ENCODE measurements at regions of chr9 and their contacts with region 1.

Region 1: GRCh38 chr9:34637356-34638137 is at the start of gene SIGMAR1:
- DNase-seq: peak; percentile 96
- ATAC-seq: peak; percentile 96
- H3K4me3 ChIP-seq: peak within 1 kb of the TSS; percentile 49 to 80 (median 63)
- H3K4me3 Mint-ChIP-seq: peak within 1 kb of the TSS; percentile 92
- H3K27ac ChIP-seq: peak within 1 kb of the TSS; percentile 56 to 69
- H3K27ac Mint-ChIP-seq: peak within 1 kb of the TSS; percentile 86
- H3K4me1 ChIP-seq: peaks cover 16 to 32% of the 10 kb centered on the region in 2 donors
- H3K4me1 Mint-ChIP-seq: peaks cover 30% of the 10 kb centered on the region
- H3K27me3 ChIP-seq: no peaks in the 10 kb centered on the region
- H3K27me3 Mint-ChIP-seq: no peaks in the 10 kb centered on the region
- CTCF ChIP-seq: no peak
- total RNA-seq, gene SIGMAR1: 21.4 and 23.0 TPM in 2 replicates

Region 2: DNA sequence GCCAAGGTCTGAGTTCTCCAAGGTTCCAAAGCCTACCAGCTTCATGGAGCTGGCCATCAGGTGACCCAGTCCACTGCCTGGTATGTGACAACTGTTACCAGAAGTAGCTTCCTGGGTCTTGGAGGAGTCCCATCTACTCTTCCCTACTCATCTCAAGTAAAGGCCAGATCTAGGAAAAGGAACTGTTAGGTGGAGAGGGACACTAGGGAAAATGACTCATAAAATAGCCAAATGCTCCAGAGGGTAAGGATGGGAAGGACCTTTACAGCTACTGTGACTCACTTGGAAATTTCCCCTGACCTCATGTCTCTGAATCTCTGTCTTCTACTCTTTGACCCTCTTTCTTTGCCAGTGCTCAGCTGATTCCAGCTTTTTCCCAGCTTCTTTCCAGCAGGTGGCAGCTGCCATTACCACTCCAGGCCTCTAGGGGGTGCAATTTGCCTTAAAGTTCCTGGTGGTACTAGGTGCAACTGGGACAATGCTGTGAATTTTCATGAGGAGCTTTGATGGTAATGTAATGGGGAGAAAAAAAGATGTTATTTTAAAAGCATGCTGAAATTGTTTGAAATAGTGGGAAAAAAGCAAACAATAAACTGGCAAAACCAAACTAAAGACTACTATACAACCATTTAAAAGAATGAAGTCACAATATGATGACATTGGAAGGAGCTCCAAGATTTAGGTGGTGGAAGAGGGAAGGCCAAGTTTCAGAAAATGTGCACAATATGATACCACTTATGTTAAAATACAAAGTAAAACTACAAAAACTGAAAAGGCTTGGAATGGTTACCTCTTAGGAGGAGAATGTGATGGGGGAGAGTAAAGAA is 233.8 kb before region 1 on chr9:
- CTCF ChIA-PET with region 1: interaction called, 23 read pairs
- POLR2A ChIA-PET with region 1: no interaction called
- intact Hi-C with region 1: no loop called
- DNase-seq: peak; percentile 63
- ATAC-seq: peak; percentile 67
- H3K4me3 ChIP-seq: no peak overlapping the region
- H3K4me3 Mint-ChIP-seq: no peak overlapping the region
- H3K27ac ChIP-seq: no peak overlapping the region
- H3K27ac Mint-ChIP-seq: no peak overlapping the region
- H3K4me1 ChIP-seq: no peaks in the 10 kb centered on the region
- H3K4me1 Mint-ChIP-seq: no peaks in the 10 kb centered on the region
- H3K27me3 ChIP-seq: no peaks in the 10 kb centered on the region
- H3K27me3 Mint-ChIP-seq: no peaks in the 10 kb centered on the region
- CTCF ChIP-seq: peak; percentile 100

Region 3: DNA sequence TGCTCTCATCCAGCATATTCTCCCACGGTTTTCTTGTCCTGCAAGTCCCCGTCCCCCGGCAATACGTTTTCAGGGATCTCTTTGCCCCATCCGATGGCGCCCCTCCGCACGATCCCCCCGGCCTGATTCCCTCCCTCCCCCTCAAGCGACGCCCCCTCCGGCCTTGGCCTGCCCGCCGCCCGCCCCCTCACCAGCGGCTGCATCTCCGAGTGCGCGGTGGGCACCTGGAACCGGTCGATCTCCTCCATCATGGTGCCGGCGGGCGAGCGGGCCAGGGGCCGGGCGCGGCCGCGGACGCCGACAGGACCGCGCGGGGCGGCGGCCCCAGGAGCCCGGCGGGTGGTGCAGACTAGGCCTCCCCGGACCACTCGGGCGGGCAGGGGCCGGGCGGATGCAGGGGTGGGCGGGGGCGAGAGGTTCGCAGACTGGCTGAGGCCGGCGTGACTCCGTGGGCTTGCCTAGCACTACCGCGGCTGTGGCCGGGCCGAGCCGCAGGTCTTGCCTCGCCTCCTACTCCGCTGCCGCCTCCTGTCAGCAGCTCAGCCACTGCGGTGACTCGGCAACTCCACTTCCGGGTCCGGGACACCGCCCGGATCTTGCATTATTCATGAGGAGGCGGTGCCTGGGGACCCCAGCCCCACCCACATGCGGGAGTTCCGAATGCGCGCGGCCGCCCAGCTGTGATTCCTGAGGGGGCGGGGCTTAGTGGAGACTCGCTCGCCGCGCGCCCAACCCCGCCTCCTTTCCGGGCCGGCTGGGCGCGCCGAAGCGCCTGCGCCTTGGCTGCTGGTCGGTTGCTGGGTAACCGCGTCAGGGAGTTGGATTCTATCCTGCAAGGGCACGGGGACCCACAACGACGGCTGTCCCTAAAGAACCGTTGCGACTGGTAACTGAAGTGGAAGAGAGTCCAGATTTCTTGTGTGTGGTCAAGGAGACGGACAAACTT is 179.3 kb before region 1 on chr9 and contains the starts of genes DNAI1 and FAM219A:
- CTCF ChIA-PET with region 1: interaction called, 7 read pairs
- POLR2A ChIA-PET with region 1: no interaction called
- intact Hi-C with region 1: loop called (anchors 1 kb)
- DNase-seq: peak; percentile 99
- ATAC-seq: peak; percentile 96
- H3K4me3 ChIP-seq: peak within 1 kb of the TSS; percentile 32 to 76 (median 58)
- H3K4me3 Mint-ChIP-seq: peak within 1 kb of the TSS; percentile 96
- H3K27ac ChIP-seq: no peak within 1 kb of the TSS
- H3K27ac Mint-ChIP-seq: peak within 1 kb of the TSS; percentile 86
- H3K4me1 ChIP-seq: peaks cover 14 to 24% of the 10 kb centered on the region in 2 donors
- H3K4me1 Mint-ChIP-seq: peaks cover 35% of the 10 kb centered on the region
- H3K27me3 ChIP-seq: peaks cover 0 to 9% (median 4%) of the 10 kb centered on the region in 4 experiments
- H3K27me3 Mint-ChIP-seq: peaks cover 14% of the 10 kb centered on the region
- CTCF ChIP-seq: no peak
- total RNA-seq, gene DNAI1: not detected in 2 replicates
- total RNA-seq, gene FAM219A: 16.0 and 17.3 TPM in 2 replicates

Region 4: DNA sequence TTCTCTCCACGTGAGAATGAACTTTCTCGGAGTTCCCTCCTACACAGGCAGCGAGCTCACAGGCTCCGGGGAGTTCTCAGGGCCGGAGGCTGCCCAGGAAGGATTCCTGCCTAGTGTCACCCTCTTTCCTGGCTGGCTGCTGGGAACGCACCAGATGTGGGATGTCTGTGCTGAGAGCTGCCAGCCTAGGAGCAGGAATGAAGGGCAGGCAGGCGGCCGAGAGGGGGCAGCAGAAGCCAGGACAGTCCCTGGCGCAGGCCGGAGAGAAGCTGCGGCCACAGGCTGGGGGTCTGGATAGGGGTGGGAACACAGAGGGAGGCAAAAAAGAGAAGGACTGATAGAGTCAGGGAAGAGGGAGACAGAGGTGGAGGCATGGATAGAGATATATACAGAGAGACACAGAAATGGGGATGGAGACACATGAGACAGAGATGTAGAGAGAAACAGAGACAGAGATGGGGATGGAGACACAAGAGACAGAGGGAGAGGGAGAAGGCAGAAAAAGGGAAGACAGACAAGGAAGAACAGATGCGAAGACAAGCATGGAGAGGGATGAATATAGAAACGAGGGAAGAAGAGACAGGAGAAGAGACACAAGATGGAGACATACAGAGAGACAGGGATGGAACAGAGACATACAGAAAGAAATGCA is 89.5 kb before region 1 on chr9:
- CTCF ChIA-PET with region 1: interaction called, 9 read pairs
- POLR2A ChIA-PET with region 1: no interaction called
- intact Hi-C with region 1: loop called (anchors 2 kb)
- DNase-seq: peak; percentile 43
- ATAC-seq: peak; percentile 41
- H3K4me3 ChIP-seq: no peak overlapping the region
- H3K4me3 Mint-ChIP-seq: no peak overlapping the region
- H3K27ac ChIP-seq: no peak overlapping the region
- H3K27ac Mint-ChIP-seq: no peak overlapping the region
- H3K4me1 ChIP-seq: no peaks in the 10 kb centered on the region
- H3K4me1 Mint-ChIP-seq: no peaks in the 10 kb centered on the region
- H3K27me3 ChIP-seq: peaks cover 0 to 17% (median 5%) of the 10 kb centered on the region in 4 experiments
- H3K27me3 Mint-ChIP-seq: peaks cover 32% of the 10 kb centered on the region
- CTCF ChIP-seq: peak; percentile 58

Region 5: DNA sequence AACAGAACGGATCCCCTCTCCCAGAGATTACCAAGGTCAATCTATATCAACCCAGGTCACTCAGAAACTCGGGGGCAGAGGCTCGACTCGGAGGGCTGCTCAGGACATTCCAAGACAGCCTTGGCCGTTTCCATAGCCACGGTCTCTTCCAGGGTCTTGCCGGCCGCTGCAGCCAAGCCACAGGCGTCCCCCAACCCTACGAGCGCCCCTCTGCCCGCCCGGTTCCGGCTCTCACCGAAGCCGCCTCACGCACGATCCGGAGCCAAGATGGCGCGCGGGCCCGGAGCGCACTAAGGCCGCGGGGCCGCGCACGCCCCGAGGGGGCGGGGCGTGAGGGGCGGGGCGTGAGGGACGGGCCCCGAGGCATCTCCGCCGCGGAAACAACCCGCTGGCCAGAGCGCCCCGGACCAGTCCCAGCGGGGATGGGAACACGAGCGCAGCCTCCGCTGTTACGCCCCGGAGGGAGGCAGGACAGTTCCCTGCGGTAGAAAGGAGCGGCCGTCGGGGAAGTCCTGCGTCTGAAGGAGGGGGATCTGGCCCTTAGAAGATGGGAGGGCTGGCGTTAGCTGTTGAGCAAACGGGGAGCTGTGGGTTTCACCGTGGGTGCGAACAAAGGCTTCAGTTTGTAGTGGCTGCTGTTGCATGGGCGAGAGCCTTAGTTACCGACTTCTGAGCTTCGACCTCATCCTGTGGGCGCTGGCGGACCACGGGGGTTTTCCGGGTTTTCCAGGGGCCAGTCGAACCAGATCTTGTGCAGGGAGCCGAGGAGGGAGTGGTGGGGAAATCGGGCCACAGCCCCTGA is 25.5 kb before region 1 on chr9 and contains the start of gene RPP25L:
- CTCF ChIA-PET with region 1: interaction called, 150 read pairs
- POLR2A ChIA-PET with region 1: interaction called, 10 read pairs
- intact Hi-C with region 1: loop called (anchors 1 kb)
- DNase-seq: peak; percentile 91
- ATAC-seq: peak; percentile 95
- H3K4me3 ChIP-seq: peak within 1 kb of the TSS; percentile 69 to 97 (median 80)
- H3K4me3 Mint-ChIP-seq: peak within 1 kb of the TSS; percentile 91
- H3K27ac ChIP-seq: peak within 1 kb of the TSS; percentile 78 to 87
- H3K27ac Mint-ChIP-seq: peak within 1 kb of the TSS; percentile 90
- H3K4me1 ChIP-seq: peaks cover 7 to 21% of the 10 kb centered on the region in 2 donors
- H3K4me1 Mint-ChIP-seq: peaks cover 22% of the 10 kb centered on the region
- H3K27me3 ChIP-seq: no peaks in the 10 kb centered on the region
- H3K27me3 Mint-ChIP-seq: no peaks in the 10 kb centered on the region
- CTCF ChIP-seq: no peak
- total RNA-seq, gene RPP25L: 20.2 and 21.7 TPM in 2 replicates

Region 6: DNA sequence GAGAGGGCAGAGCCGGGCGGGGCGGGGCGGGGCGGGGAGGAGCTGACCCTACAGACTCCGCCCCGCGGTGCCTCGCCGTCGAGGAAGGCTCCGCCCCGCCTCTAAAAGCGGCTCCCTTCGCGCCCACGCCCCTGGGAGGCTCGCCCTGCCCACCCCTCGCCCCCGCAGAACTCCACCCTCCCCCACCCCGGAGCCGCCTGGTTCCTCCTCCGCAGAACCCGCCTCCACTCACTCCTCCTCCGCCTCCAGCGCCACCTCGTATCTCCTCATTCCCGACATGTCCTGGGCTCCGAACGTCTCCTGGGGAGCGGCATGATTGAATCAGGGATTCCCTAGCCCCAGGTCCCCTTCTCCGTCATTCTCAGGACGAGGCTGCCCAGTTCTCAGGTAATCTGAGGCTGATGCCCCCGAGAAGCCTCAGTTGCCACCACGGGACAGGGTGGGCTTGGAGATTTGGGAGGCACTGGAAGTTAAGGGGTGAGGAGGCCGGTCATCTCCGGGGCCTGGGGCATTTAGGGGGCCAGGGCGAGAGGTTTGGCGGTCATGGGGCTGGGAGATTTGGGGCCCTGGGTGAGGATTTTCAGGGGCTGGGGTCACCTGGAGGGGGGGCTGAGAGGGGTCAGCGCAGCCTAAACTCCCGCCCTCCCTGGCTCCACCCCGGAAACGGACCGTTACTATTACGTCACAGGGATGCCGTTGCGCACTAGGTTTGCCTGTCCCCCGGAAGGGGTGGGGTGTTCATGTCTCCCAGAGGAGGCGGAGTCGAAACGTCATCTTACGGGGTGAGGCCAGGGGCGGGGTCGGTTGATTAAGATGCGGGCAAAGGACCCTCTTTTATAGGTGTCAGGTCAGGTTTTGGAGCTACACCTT is 28.1 kb after region 1 on chr9:
- CTCF ChIA-PET with region 1: interaction called, 8 read pairs
- POLR2A ChIA-PET with region 1: interaction called, 12 read pairs
- intact Hi-C with region 1: loop called (anchors 1 kb)
- DNase-seq: peak; percentile 93
- ATAC-seq: peak; percentile 90
- H3K4me3 ChIP-seq: peak overlapping the region; percentile 65 to 87 (median 83)
- H3K4me3 Mint-ChIP-seq: peak overlapping the region; percentile 94
- H3K27ac ChIP-seq: peak overlapping the region; percentile 86 to 93
- H3K27ac Mint-ChIP-seq: peak overlapping the region; percentile 94
- H3K4me1 ChIP-seq: peaks cover 10 to 18% of the 10 kb centered on the region in 2 donors
- H3K4me1 Mint-ChIP-seq: peaks cover 20% of the 10 kb centered on the region
- H3K27me3 ChIP-seq: no peaks in the 10 kb centered on the region
- H3K27me3 Mint-ChIP-seq: no peaks in the 10 kb centered on the region
- CTCF ChIP-seq: no peak

Measured in B cell (primary cell).